ENCODE measurements at regions of chr1 and their contacts with region 1.

Region 1: DNA sequence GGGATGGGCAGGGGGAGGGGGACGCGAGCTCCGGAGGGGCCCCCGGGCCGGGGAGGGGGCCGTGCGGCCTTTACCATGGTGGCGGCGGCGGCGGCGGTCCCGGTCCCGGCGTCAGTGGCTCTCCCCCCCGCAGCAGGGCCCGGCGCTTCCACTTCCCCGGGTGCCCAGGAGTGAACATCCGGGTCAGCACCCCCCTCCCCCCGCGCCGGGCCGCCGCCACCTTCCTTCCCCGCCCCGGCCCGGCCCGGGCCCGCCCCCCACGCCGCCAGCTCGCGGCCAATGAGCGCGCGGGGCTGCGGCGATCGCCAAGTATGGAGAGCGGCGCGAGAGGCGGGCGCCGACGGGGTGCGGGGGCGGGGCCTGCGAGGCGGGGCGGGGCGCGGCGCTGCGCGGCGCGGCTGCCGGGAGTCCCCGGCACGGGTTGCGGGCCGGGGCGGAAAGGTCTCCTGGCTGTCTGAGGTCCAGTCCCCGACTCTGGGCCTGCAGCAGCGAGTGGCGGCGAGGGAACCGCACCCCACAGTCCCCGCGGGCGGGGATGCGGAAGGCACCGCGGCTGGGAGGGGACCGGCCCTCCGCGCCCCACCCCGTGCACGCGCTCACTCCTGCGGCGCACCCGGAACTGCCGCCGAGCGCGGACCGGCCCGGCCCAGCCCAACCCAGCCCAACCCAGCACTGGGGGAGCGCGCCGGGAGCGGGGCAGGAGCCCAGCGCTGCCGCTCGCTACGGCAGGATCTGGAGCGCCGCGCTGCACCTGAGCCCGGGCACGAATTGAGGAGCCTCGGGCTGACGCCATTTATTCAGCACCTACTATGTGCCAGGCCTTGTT is at the start of gene CAPZB:
- DNase-seq: peak; percentile 81
- ATAC-seq: peak; percentile 95
- H3K4me3 ChIP-seq: peak within 1 kb of the TSS; percentile 99
- H3K27ac ChIP-seq: peak within 1 kb of the TSS; percentile 99
- H3K4me1 ChIP-seq: peaks cover 25% of the 10 kb centered on the region
- H3K27me3 ChIP-seq: no peaks in the 10 kb centered on the region
- CTCF ChIP-seq: no peak
- POLR2A ChIP-seq: peak; percentile 78
- RAD21 ChIP-seq: peak; percentile 26; the same call in 1 of the 2 replicates
- total RNA-seq, gene CAPZB: 180 and 216 TPM in 2 replicates

Region 2: GRCh38 chr1:18926315-18927081 is 559.1 kb before region 1 on chr1:
- CTCF ChIA-PET with region 1: no interaction called
- POLR2A ChIA-PET with region 1: no interaction called
- dilution Hi-C with region 1: no loop called
- in situ Hi-C with region 1: no loop called
- intact Hi-C with region 1: no loop called
- DNase-seq: peak; percentile 96
- ATAC-seq: peak; percentile 82
- H3K4me3 ChIP-seq: no peak overlapping the region
- H3K27ac ChIP-seq: peak overlapping the region; percentile 94
- H3K4me1 ChIP-seq: peaks cover 57% of the 10 kb centered on the region
- H3K27me3 ChIP-seq: no peaks in the 10 kb centered on the region
- CTCF ChIP-seq: no peak
- POLR2A ChIP-seq: no peak
- RAD21 ChIP-seq: no peak

Region 3: DNA sequence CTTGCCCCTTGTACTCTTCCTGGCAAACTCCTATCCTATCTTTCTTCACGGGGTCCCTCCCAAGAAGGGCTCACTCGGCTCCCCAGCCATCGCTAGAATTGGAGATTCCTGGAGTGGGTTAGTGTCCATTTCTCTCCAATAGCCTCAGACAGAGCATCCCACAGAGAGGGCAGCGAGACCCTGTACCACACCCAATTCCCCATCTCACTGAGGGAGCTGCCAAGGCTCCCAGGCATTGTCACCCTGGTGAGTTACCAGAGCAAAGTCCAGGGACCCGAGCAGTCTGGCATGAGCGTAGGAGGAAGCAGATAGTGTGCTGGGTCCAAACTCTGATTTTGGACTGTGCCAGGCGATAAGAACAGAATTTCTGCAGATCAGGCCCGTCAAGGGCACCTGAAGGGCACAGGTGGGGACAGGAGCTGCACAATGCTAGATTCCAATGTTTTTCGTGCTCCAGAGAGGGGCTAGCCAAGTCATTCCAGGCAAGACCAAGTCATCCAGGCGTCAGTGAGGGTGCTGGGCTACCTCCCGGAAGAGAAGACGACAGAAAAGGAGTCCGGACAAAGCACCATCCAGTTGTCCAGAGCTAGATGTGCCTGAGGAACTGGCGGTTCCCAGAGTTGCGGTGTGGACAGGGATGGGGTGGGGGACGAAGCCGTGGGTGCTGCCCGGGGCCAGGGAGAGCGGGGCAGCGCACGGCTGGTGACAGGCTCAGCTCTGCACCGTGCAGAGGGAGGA is 212.3 kb before region 1 on chr1:
- CTCF ChIA-PET with region 1: no interaction called
- POLR2A ChIA-PET with region 1: interaction called, 14 read pairs
- dilution Hi-C with region 1: no loop called
- in situ Hi-C with region 1: no loop called
- intact Hi-C with region 1: no loop called
- DNase-seq: no peak
- ATAC-seq: no peak
- H3K4me3 ChIP-seq: no peak overlapping the region
- H3K27ac ChIP-seq: no peak overlapping the region
- H3K4me1 ChIP-seq: no peaks in the 10 kb centered on the region
- H3K27me3 ChIP-seq: no peaks in the 10 kb centered on the region; the same call in 1 of the 2 replicates
- CTCF ChIP-seq: no peak
- POLR2A ChIP-seq: no peak
- RAD21 ChIP-seq: no peak

Region 4: DNA sequence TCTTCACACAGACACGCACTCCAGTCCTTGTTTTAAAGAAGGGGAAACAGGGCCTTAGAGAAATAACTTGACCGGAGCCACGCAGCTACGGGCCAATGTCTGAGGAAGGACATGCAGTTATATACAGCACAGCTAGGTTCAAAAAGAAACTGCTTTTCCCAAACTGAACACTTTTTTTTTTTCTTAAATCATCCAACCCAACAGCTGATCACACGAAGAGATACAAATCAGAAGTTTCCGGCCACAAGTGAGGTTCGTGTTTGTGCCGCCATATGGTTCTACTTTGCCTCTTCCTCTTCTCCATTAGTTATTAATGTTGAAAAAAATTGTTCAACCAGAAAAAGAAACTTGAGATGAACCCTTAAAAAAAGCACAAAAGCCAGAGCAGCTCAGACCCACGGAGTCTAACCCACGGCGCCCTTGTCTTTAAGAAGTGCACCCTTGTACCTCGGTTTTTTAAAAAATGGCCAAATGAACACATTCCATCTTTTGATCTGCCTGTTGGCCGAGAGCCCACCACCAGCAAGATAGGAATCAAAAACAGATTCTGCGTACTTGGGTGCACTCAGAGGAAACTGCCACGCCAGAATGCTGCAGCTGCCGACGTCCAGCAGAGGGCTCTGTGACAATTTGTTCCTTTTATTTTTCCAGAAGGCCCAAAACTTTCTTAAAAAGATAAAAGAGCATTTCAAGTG is 94.5 kb before region 1 on chr1:
- CTCF ChIA-PET with region 1: no interaction called
- POLR2A ChIA-PET with region 1: no interaction called
- dilution Hi-C with region 1: no loop called
- in situ Hi-C with region 1: no loop called
- intact Hi-C with region 1: loop called (anchors 2 kb)
- DNase-seq: peak; percentile 80
- ATAC-seq: peak; percentile 69
- H3K4me3 ChIP-seq: no peak overlapping the region
- H3K27ac ChIP-seq: peak overlapping the region; percentile 94
- H3K4me1 ChIP-seq: peaks cover 24% of the 10 kb centered on the region
- H3K27me3 ChIP-seq: no peaks in the 10 kb centered on the region
- CTCF ChIP-seq: peak; percentile 87
- POLR2A ChIP-seq: no peak
- RAD21 ChIP-seq: peak; percentile 74

Region 5: DNA sequence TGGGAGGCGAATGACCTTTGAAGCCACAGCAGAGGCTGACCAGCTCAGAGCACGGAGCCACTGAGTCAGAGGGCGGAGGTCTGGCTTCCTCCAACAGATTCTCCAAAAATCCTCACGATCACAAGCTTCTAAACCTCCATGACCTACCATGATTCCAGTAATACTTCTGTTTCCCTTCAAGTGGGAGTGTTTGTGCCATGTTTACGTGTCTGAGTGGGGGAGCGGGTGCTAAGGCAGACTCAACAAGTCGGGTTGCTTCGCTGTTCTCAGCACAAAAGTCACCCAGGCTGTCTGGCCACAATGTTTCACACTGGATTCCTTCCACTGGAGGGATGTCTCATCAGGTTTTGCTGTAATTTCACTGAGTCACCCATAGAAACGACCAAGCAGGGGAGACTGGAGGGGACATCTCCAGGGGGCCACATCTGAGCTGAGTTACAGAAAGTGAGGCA is 87.2 kb before region 1 on chr1:
- CTCF ChIA-PET with region 1: interaction called, 4 read pairs
- POLR2A ChIA-PET with region 1: no interaction called
- dilution Hi-C with region 1: no loop called
- in situ Hi-C with region 1: no loop called
- intact Hi-C with region 1: loop called (anchors 1 kb)
- DNase-seq: peak; percentile 99
- ATAC-seq: peak; percentile 87
- H3K4me3 ChIP-seq: no peak overlapping the region
- H3K27ac ChIP-seq: peak overlapping the region; percentile 56
- H3K4me1 ChIP-seq: peaks cover 46% of the 10 kb centered on the region
- H3K27me3 ChIP-seq: no peaks in the 10 kb centered on the region
- CTCF ChIP-seq: peak; percentile 74
- POLR2A ChIP-seq: no peak; the same call in 1 of the 2 replicates
- RAD21 ChIP-seq: peak; percentile 59

Region 6: GRCh38 chr1:19596714-19597495 is 111.3 kb after region 1 on chr1:
- CTCF ChIA-PET with region 1: no interaction called
- POLR2A ChIA-PET with region 1: no interaction called
- dilution Hi-C with region 1: no loop called
- in situ Hi-C with region 1: no loop called
- intact Hi-C with region 1: loop called (anchors 2 kb)
- DNase-seq: peak; percentile 97
- ATAC-seq: peak; percentile 97
- H3K4me3 ChIP-seq: peak overlapping the region; percentile 72
- H3K27ac ChIP-seq: peak overlapping the region; percentile 80
- H3K4me1 ChIP-seq: no peaks in the 10 kb centered on the region
- H3K27me3 ChIP-seq: no peaks in the 10 kb centered on the region
- CTCF ChIP-seq: no peak
- POLR2A ChIP-seq: peak; percentile 88
- RAD21 ChIP-seq: no peak

Region 7: DNA sequence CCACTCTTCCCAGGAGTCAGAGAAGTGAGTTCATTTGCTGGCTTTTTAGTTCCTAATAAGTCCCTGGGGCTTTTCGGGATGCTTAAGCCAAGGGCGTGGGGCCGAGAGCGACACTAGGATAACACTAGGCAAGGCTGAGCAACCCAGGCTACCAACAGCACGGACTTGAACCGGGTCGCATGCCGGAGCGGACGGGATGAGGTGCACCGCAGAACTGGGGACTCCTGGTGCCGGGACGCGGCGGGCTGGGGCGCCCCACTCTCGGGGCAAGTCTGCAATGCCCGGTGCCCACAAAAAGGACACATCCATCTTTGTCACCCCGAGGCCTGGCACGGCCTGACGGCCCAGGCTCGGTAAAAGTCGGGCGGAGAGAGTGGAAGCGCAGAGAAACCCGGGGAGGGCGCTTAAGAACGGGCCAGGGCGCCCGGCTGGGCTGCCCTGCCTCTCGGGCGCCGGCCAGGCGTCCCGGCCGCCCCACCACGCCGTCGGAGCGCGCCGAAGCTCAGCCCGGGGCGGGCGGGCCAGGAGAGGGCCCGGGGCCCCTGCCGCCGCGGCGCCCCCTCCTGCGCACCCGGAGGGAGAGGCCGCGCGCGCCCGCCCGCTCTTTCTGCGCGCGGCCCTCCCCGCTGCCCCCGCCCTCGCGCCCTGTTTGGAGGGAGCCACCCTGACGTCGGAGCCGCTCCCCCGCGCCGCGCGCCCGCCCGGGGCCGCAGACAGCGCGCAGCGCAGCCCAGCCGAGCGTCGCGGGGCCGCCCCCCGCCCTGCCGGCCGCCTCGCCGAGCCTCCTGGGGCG is 158.2 kb after region 1 on chr1 and contains the start of gene NBL1:
- CTCF ChIA-PET with region 1: no interaction called
- POLR2A ChIA-PET with region 1: no interaction called
- dilution Hi-C with region 1: no loop called
- in situ Hi-C with region 1: loop called (anchors 10 kb)
- intact Hi-C with region 1: loop called (anchors 2 kb)
- DNase-seq: peak; percentile 54
- ATAC-seq: peak; percentile 90
- H3K4me3 ChIP-seq: peak within 1 kb of the TSS; percentile 72
- H3K27ac ChIP-seq: peak within 1 kb of the TSS; percentile 71
- H3K4me1 ChIP-seq: peaks cover 22% of the 10 kb centered on the region; the same call in 1 of the 2 replicates
- H3K27me3 ChIP-seq: no peaks in the 10 kb centered on the region
- CTCF ChIP-seq: peak; percentile 21; the same call in 1 of the 2 replicates
- POLR2A ChIP-seq: no peak
- RAD21 ChIP-seq: 0 out of 2 replicates have a peak, but pooled peaks have one; percentile 7
- total RNA-seq, gene NBL1: 12.5 and 14.0 TPM in 2 replicates